Head of caudate nucleus (tissue), 42 donors: ENCODE measurements at regions of chr5 and their contacts with region 1.

Region 1: GRCh38 chr5:134527146-134527960 is 1.9 kb downstream of the JADE2 start:
- DNase-seq: peak in 41 of 42 donors; percentile 52 to 91 (median 83)

Region 2: GRCh38 chr5:134370871-134371833 is 156.2 kb before region 1 on chr5 and contains the start of gene UBE2B:
- intact Hi-C with region 1: loop called (anchors 2 kb)
- DNase-seq: peak; percentile 95 to 100 (median 99)

Region 3: DNA sequence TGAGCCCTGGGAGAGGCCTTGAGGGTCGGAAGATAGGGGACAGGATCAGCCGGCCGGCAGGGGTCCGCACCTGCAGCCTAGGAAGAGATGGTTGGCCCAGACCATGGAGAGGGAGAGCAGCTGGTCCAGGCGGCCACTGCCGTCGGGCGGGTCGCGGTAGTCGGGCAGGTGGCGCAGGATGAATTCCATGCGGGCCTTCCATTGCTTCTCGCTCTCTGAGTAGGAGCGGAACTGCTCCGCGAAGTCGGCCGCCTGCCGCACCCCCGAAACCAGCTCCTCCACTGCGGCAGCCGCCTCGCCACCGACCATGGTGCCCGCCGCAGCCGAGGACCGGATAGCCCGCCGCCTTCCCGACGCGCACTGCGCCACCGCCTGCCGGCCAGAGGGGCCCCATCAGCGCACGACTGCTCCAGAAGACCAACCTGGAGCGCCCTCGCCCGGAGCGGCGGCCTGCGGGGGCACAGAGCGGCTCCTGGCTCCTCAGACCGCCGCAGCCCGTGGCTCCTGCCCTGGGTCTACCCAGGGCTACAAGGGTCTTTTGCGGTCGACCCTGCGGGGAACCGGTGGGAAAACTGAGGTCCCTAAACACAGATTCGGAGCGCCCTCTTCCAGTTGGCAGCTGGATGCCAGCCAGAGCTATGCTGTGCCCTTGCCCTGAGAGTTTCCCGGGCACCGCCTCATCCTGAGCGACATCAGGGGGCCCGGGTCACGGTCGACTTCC is 115.6 kb before region 1 on chr5 and contains the start of gene CDKN2AIPNL:
- intact Hi-C with region 1: loop called (anchors 2 kb)
- DNase-seq: peak; percentile 87 to 99 (median 97)

Region 4: GRCh38 chr5:134577796-134578363 is 50.5 kb after region 1 on chr5:
- intact Hi-C with region 1: loop called (anchors 5 kb)
- DNase-seq: peak; percentile 69 to 94 (median 86)

Region 5: DNA sequence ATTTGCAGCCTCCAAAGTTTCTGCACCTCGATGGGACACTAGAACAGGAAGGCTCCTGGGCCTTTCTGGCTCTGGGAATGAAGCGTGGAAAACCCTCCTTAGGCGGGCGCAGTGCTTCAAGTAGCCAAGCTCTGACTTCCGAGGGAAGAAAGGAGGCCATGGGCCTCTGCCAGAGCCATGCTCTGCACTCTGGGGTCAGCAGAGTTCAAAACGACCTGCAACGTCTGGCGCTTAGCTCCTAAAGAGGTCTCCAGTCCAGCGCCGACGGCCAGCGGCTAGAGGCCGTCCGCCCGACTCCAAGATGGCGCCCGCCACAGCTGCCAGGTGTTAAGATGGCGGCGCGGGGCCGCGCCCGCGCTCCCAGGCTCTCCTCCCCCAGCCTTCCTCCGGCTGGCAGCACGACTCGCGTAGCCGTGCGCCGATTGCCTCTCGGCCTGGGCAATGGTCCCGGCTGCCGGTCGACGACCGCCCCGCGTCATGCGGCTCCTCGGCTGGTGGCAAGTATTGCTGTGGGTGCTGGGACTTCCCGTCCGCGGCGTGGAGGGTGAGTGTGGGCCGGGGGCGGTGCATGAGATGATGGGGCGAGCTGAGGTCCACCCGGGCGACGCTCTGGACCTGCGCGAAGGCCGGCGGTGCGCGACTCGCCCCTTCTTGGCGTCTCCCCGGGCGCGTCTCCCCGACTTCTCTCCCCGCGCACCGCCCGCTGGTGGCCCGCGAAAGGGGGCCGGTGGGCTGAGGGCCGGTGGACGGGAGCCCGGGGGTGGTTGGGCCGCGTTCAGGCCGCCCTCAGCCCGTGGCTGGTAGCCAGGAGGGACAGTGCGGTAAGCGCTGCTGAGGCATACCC is 346.9 kb after region 1 on chr5 and contains the start of gene TXNDC15:
- intact Hi-C with region 1: loop called (anchors 10 kb)
- DNase-seq: peak; percentile 69 to 95 (median 89)